CD8-positive, alpha-beta T cell (primary cell): ENCODE measurements at regions of chr18 and their contacts with region 1.

Region 1: DNA sequence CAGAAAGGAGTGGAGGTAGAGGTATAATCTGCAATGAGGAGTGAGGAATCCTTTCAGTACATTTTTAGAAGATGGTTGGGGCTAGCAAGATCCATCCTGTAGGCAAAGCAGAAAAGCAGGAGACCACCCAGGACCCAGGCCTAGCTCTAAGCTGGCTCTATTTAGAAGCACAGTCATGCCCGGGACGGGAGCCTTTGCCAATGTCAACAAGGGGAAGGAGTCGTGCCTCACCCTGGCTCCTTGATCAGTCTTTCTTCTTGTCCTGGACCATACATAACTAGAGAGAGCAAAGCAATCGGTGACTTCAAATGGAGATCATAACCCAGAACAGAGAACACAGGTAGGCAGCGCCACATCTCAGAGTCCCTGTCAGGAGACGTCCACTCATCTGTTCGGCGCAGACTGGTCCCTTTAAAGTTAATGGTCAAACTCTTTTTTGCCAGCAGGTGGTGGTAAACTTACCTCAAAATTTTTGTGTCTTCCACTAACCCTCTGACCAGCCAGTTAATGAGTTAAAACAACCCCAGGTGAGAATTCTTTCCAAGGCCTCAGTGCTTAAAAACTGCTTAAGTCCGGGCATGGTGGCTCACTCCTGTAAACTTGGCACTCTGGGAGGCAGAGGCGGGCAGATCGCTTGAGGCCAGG is 8.0 kb downstream of the MC5R start:
- DNase-seq: no peak
- ATAC-seq: no peak
- H3K4me3 ChIP-seq: no peak overlapping the region
- H3K4me3 Mint-ChIP-seq: no peak overlapping the region
- H3K27ac ChIP-seq: no peak overlapping the region
- H3K27ac Mint-ChIP-seq: no peak overlapping the region
- H3K4me1 ChIP-seq: no peaks in the 10 kb centered on the region
- H3K4me1 Mint-ChIP-seq: no peaks in the 10 kb centered on the region
- H3K27me3 ChIP-seq: no peaks in the 10 kb centered on the region
- H3K27me3 Mint-ChIP-seq: peaks cover 38% of the 10 kb centered on the region
- CTCF ChIP-seq: no peak

Region 2: GRCh38 chr18:14074187-14074586 is 242.2 kb after region 1 on chr18:
- CTCF ChIA-PET with region 1: no interaction called
- POLR2A ChIA-PET with region 1: no interaction called
- intact Hi-C with region 1: loop called in 1 of 2 experiments (anchors 10 kb)
- DNase-seq: peak in 2 of 9 experiments; percentile 11 to 12
- ATAC-seq: no peak
- H3K4me3 ChIP-seq: no peak overlapping the region
- H3K4me3 Mint-ChIP-seq: no peak overlapping the region
- H3K27ac ChIP-seq: no peak overlapping the region
- H3K27ac Mint-ChIP-seq: no peak overlapping the region
- H3K4me1 ChIP-seq: no peaks in the 10 kb centered on the region
- H3K4me1 Mint-ChIP-seq: no peaks in the 10 kb centered on the region
- H3K27me3 ChIP-seq: no peaks in the 10 kb centered on the region
- H3K27me3 Mint-ChIP-seq: no peaks in the 10 kb centered on the region
- CTCF ChIP-seq: no peak